Caco-2 (cell line): ENCODE measurements at regions of chr3 and their contacts with region 1.

Region 1: DNA sequence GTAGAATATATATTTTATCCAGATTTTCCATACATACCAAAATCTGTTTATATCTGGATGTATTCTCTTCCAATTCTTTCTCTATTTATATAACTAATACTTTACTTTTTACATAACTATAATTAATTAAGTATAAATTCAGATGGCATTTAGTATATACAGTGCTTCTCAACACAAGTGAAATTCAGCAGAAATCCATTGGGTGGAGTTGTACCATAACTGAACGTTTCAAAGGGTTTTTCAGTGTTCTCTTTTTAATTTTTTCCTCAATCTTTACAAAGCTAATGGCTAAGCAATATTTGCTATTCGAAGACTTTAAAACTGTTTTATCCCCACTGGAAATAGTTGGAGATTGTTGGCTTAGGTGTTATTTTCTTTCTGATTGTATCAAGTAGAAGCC is 13.9 kb upstream of the ZBBX start:
- DNase-seq: no peak
- H3K4me3 ChIP-seq: no peak overlapping the region
- H3K4me3 Mint-ChIP-seq: no peak overlapping the region
- H3K27ac Mint-ChIP-seq: no peak overlapping the region
- H3K4me1 ChIP-seq: no peaks in the 10 kb centered on the region
- H3K4me1 Mint-ChIP-seq: no peaks in the 10 kb centered on the region
- H3K27me3 ChIP-seq: no peaks in the 10 kb centered on the region
- H3K27me3 Mint-ChIP-seq: peaks cover 3% of the 10 kb centered on the region
- CTCF ChIP-seq: peak in 1 of 2 experiments; percentile 19

Region 2: DNA sequence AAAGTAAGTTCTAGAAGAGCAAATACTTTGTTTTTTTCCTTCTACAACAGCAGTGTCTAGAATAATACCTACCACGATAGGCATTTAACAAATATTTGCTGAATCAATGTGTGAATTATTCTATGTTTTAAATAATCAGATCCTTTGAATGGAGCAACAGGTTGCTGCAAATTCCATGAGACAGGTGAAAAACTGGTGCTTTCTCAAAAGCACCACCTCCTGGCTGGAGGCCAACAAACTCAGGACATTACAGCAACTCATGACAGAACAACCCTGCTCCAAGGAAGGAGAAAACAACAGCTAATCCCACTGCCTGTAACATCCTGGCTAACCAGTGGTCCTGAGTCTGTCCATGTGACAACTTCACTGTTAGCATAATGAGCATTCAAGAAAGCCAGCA is 145.8 kb after region 1 on chr3:
- CTCF ChIA-PET with region 1: no interaction called
- POLR2A ChIA-PET with region 1: no interaction called
- intact Hi-C with region 1: no loop called
- DNase-seq: no peak
- H3K4me3 ChIP-seq: no peak overlapping the region
- H3K4me3 Mint-ChIP-seq: no peak overlapping the region
- H3K27ac Mint-ChIP-seq: no peak overlapping the region
- H3K4me1 ChIP-seq: no peaks in the 10 kb centered on the region
- H3K4me1 Mint-ChIP-seq: no peaks in the 10 kb centered on the region
- H3K27me3 ChIP-seq: no peaks in the 10 kb centered on the region
- H3K27me3 Mint-ChIP-seq: peaks cover 8% of the 10 kb centered on the region
- CTCF ChIP-seq: no peak

Region 3: DNA sequence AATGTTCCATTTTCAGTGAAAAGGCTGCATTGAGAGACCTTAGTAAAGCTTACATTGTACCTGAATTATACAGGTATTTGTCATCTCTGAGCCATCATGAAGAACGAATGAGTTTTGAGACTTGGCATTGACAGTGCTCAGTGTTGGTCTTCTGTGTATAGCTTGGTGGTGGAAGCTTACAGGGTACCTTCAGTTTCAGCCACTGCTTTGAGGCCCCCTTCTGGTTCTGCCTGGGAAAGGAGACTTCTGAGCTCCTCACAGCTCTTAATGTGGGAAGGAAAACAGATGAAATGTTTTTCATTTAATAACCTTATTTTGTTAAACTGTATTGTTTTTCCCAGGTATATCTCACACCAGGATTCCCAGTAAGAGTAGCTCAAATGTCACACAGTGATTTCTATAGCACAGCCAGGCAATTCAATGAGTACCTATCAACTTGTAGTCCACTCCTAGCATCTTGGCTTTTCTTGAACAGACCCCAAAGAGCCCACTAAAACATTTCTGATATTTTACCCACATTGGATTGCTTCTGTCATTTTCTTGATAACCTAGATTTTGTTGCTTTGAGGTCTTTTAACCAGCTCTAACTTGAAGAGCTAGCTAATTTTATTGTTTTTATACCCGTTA is 347.1 kb after region 1 on chr3:
- CTCF ChIA-PET with region 1: no interaction called
- POLR2A ChIA-PET with region 1: no interaction called
- intact Hi-C with region 1: loop called (anchors 5 kb)
- DNase-seq: peak; percentile 43 to 55
- H3K4me3 ChIP-seq: no peak overlapping the region
- H3K4me3 Mint-ChIP-seq: no peak overlapping the region
- H3K27ac Mint-ChIP-seq: no peak overlapping the region
- H3K4me1 ChIP-seq: no peaks in the 10 kb centered on the region
- H3K4me1 Mint-ChIP-seq: peaks cover 6% of the 10 kb centered on the region
- H3K27me3 ChIP-seq: no peaks in the 10 kb centered on the region
- H3K27me3 Mint-ChIP-seq: no peaks in the 10 kb centered on the region
- CTCF ChIP-seq: peak; percentile 36 to 85